Gastrocnemius medialis (tissue), 4 donors: ENCODE measurements at regions of chr5 and their contacts with region 1.

Region 1: DNA sequence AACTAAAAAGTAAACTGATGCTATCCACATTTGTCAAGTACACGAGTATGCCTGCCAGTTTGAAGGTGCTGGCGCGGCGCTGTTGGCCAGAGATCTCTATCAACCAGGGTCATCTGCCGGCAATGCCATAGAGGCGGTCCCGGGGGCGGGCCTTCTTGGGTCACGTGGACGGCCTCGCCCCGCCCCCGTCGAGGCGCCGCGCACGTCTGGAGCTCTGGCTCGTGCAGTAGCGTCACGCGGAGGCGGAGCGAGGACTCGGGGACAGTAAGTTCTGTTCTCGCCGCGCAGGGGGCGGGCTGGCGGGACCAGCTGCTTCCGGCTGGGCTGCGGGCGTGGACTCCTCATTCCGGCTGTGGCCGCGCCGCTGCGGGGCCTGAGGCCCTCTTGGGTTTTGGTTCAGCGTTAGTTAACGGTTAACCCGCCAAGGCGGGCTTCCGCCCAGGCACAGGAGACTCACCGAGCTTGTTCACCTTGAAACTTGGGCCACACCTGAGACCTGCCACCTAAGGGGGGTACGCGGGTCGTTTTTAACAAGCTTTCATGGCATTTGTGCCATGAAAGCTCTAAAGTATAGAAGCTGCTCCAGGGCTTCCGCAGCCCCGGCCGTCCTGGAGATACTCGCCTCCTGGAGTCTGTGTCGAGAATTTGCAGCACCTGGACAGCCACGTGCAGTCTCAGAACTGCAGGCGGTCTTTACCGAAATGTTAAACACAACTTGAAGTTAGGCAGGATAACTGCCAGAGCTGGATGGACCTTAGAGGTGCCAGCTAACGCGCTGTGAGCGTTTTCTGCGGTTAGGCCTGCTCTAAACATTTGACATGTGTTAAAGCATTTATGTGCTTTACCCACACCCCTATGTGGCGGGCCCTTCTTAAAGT is at the start of gene RFESD:
- DNase-seq: peak; percentile 98 to 100
- ATAC-seq: peak; percentile 82 to 83
- H3K4me3 ChIP-seq: peak within 1 kb of the TSS; percentile 62 to 71 (median 66)
- H3K27ac ChIP-seq: peak within 1 kb of the TSS; percentile 95 to 99 (median 97)
- H3K4me1 ChIP-seq: peaks cover 16 to 39% of the 10 kb centered on the region in 2 donors
- H3K27me3 ChIP-seq: no peaks in the 10 kb centered on the region
- CTCF ChIP-seq: peak in 2 of 5 experiments; percentile 19 to 29
- POLR2A ChIP-seq: peak; percentile 96 to 98
- total RNA-seq, gene RFESD: 0.89 to 2.9 (median 1.6) TPM

Region 2: DNA sequence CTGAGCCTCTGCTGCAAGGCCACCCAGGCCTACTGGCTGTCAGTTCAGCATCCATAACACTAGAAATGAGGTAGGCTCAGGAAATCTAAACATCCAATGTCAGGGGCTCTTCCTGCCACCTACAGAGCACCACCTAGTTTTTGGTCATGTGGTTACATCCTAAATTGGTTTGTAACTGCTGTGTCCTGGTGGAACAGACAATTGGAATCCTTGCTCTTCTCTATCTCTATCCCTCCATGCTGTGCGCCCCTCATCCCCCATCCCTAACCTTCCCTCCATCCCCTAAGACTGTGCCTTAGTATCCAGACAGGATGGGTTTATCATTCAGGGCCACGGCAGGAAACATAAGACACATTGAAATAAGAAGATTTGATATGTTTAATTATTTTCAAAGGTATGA is 350.5 kb before region 1 on chr5:
- in situ Hi-C with region 1: no loop called
- intact Hi-C with region 1: no loop called
- DNase-seq: no peak
- ATAC-seq: no peak
- H3K4me3 ChIP-seq: no peak overlapping the region
- H3K27ac ChIP-seq: no peak overlapping the region
- H3K4me1 ChIP-seq: no peaks in the 10 kb centered on the region
- H3K27me3 ChIP-seq: no peaks in the 10 kb centered on the region
- CTCF ChIP-seq: no peak
- POLR2A ChIP-seq: no peak

Region 3: GRCh38 chr5:95730730-95731570 is 84.2 kb after region 1 on chr5 and contains the start of gene RHOBTB3:
- in situ Hi-C with region 1: no loop called
- intact Hi-C with region 1: loop called (anchors 1 kb)
- DNase-seq: peak; percentile 89 to 91
- ATAC-seq: peak; percentile 69 to 72
- H3K4me3 ChIP-seq: peak within 1 kb of the TSS; percentile 80 to 87 (median 85)
- H3K27ac ChIP-seq: peak within 1 kb of the TSS; percentile 91 to 96 (median 94)
- H3K4me1 ChIP-seq: peaks cover 39 to 48% of the 10 kb centered on the region in 2 donors
- H3K27me3 ChIP-seq: no peaks in the 10 kb centered on the region
- CTCF ChIP-seq: peak in 1 of 5 experiments; percentile 16
- POLR2A ChIP-seq: peak; percentile 88 to 92
- total RNA-seq, gene RHOBTB3: 40.1 to 134 (median 86.9) TPM

Region 4: GRCh38 chr5:95794070-95794516 is 147.3 kb after region 1 on chr5:
- in situ Hi-C with region 1: no loop called
- intact Hi-C with region 1: no loop called
- DNase-seq: no peak
- ATAC-seq: no peak
- H3K4me3 ChIP-seq: no peak overlapping the region
- H3K27ac ChIP-seq: no peak overlapping the region
- H3K4me1 ChIP-seq: no peaks in the 10 kb centered on the region
- H3K27me3 ChIP-seq: no peaks in the 10 kb centered on the region
- CTCF ChIP-seq: no peak
- POLR2A ChIP-seq: no peak

Region 5: DNA sequence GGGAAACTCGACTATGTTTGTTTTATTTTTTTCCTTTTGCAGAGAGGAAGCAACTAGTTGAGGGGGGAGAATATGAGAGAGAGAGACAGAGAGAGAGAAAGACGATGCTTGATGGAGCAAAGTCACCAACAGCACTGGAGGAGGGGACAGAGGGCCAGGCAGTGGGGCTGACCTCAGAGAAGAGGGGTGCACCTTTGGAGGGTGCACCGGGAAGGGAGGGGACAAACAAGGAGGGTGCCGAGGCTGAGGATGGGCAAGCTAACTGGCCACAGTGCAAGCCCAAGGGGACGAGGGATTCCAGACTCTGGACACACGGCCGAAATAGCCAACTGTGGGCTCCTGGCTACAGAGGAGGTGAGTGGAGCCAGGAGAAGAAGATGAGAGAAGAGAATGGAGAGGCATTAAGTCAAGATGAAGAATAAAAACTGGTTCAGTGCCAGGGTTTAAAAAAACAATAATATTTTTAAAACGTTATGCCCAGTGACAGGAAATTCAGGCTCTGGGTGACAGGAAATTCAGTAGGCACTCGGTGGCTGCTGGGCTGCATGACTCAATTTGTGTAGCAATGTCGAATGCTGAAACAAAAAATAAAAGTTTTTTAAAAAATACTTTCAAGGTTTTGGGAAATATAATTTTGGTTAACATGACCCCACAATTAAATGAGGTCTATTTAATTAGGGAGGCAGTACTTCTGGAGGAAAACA is 189.0 kb after region 1 on chr5:
- in situ Hi-C with region 1: no loop called
- intact Hi-C with region 1: loop called (anchors 2 kb)
- DNase-seq: peak in 1 of 2 donors; percentile 55
- ATAC-seq: no peak
- H3K4me3 ChIP-seq: peak overlapping the region; percentile 59 to 78 (median 66)
- H3K27ac ChIP-seq: peak overlapping the region; percentile 90 to 95 (median 92)
- H3K4me1 ChIP-seq: peaks cover 21 to 56% of the 10 kb centered on the region in 2 donors
- H3K27me3 ChIP-seq: no peaks in the 10 kb centered on the region
- CTCF ChIP-seq: no peak
- POLR2A ChIP-seq: no peak

Region 6: DNA sequence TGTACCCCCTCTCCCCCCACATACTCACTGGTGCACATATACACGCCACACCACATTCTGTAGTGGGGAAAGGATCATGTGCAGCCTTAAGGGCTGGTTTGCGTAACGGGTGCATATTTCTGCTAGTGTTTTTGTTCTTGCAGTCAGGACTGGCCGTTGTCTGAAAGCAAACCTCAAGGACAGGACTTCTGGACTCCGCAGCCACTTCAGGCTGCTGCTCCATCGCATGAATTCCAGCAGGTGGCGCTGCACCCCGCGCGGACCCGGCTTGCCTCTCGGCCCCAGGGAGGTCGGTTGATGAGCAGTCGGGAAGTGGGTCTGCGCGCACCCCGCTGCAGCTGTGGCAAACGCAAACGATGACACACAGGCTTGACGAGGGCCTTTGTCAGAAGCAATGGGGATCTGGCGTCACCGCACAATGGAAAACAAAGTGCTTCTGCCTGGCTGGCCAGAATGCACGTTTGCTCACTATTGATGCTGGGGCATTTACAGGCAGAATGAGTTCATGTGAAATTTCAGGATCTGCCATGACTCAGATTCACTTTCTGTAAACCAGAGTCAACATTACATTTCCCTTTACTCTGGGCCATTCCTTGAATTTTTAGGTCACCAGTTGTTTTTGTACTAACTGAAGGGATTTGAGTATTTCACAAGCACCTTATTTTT is 212.0 kb after region 1 on chr5:
- in situ Hi-C with region 1: no loop called
- intact Hi-C with region 1: loop called (anchors 1 kb)
- DNase-seq: peak; percentile 88 to 92
- ATAC-seq: peak; percentile 35 to 37
- H3K4me3 ChIP-seq: peak overlapping the region; percentile 5 to 36 (median 12)
- H3K27ac ChIP-seq: peak overlapping the region; percentile 86 to 94 (median 89)
- H3K4me1 ChIP-seq: peaks cover 70 to 76% of the 10 kb centered on the region in 2 donors
- H3K27me3 ChIP-seq: no peaks in the 10 kb centered on the region
- CTCF ChIP-seq: peak; percentile 98 to 100 (median 99)
- POLR2A ChIP-seq: peak; percentile 29 to 58

Region 7: GRCh38 chr5:96336351-96336985 is 689.7 kb after region 1 on chr5:
- in situ Hi-C with region 1: loop called in 3 of 4 experiments (anchors 25 kb)
- intact Hi-C with region 1: loop called (anchors 1 kb)
- DNase-seq: peak; percentile 63 to 75
- ATAC-seq: peak; percentile 71
- H3K4me3 ChIP-seq: peak overlapping the region in 2 of 4 donors; percentile 8 to 13
- H3K27ac ChIP-seq: peak overlapping the region; percentile 77 to 89 (median 85)
- H3K4me1 ChIP-seq: peaks cover 32 to 46% of the 10 kb centered on the region in 2 donors
- H3K27me3 ChIP-seq: no peaks in the 10 kb centered on the region
- CTCF ChIP-seq: peak; percentile 48 to 89 (median 79)
- POLR2A ChIP-seq: no peak

Region 8: DNA sequence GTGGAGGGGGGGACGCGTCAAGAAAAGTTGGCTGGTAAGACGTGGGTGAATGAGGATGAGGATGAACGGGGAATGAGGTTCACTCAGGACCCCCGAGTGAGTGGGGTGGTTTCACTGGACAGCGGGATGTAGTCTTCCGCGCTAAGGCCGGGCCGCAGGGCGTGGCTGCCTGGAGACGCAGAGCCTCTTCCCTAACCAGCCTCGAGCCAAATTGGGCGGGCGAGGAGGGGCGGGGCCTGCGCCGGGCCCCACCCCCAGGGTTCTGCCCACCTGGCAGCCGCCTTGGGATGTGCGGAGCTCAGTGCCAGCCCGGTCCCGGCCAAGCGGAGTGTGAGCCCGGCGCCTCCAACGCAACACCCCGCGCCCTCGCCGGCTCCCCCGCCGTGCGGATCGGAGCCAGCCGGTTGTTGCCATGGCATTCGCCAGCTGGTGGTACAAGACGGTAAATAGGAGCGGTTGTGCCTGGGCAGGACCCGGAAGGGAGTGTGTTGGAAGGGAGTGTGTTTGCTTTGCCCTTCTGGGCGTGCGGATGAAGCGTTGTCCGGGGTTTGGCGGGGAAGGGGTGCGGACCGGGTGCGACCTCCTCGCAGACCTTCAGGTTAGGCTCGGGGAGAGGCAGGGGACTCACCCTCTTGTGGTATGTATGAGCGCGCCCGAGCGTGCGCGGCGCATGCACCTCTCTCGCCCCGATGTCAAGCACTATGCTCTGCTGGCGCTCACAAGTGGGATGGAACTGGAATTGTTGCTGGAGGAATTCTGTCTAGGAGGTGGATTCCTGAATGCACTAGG is 1016.1 kb after region 1 on chr5:
- in situ Hi-C with region 1: no loop called
- intact Hi-C with region 1: loop called (anchors 5 kb)
- DNase-seq: peak; percentile 88 to 94
- ATAC-seq: peak; percentile 80 to 84
- H3K4me3 ChIP-seq: peak overlapping the region; percentile 72 to 98 (median 88)
- H3K27ac ChIP-seq: peak overlapping the region; percentile 94 to 98 (median 96)
- H3K4me1 ChIP-seq: peaks cover 25 to 28% of the 10 kb centered on the region in 2 donors
- H3K27me3 ChIP-seq: no peaks in the 10 kb centered on the region
- CTCF ChIP-seq: peak in 2 of 5 experiments; percentile 4 to 19
- POLR2A ChIP-seq: peak; percentile 89